Dendritic cell treated with granulocyte-macrophage colony-stimulating factor and Interleukin-4, amounts not matched to agents 40 ng/mL and 50 ng/mL, for 4 days (primary cell): ENCODE measurements at regions of chr15 and their contacts with region 1.

Region 1: DNA sequence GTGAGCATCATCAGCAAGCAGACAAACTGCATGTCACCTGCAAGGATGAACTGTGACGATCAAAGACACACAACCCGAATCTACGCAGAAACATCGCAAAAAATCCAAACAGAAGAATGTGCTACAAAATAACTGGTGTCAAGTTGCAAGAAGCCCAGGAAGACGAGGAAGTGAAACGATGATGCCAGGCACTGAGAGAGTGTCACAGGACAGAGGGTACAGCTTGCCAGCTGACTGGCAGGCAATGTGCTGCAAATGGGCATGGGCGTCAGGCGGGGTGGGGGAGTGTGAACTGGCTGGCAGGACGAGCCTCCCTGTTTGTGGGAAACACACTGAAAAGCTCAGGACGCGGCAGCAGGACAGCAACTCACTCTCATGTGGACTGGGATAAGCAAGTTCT is 28.9 kb upstream of the OCA2 start:
- H3K4me3 Mint-ChIP-seq: no peak overlapping the region
- H3K27ac Mint-ChIP-seq: peak overlapping the region; percentile 25
- H3K4me1 Mint-ChIP-seq: peaks cover 28% of the 10 kb centered on the region
- H3K27me3 Mint-ChIP-seq: no peaks in the 10 kb centered on the region

Region 2: DNA sequence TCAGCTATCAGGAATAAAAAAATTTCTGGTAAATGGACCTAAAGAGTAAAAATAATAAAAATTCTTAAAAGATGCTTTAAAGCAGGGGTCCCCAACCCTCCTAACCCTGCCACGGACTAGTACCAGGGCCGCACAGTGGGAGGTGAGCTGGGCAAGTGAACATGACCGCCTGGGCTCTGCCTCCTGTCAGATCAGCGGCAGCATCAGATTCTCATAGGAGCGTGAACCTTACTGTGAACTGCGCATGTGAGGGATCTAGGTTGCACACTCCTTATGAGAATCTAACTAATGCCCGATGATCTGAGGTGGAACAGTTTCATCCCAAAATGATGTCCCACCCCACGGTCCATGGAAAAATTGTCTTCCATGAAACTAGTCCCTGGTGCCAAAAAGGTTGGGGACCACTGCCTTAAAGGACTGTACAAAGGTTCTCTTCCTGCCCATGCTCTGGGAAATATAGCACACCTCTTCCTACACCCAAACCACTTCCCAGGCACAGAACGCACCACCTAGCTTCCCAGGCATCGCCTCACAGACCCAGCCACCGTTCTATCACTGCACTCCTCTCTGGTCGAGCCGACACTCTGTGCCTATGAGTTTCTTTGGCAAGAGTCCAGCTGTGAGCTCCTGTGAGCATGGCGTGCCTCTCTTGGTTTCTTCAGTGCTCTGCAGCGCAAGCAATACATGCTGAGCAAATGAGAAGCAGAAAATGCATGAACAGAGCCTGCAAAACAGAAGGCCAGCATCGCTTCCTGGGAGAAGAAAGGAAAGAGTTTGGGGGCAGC is 133.8 kb before region 1 on chr15:
- intact Hi-C with region 1: no loop called
- H3K4me3 Mint-ChIP-seq: no peak overlapping the region
- H3K27ac Mint-ChIP-seq: no peak overlapping the region
- H3K4me1 Mint-ChIP-seq: no peaks in the 10 kb centered on the region
- H3K27me3 Mint-ChIP-seq: no peaks in the 10 kb centered on the region

Region 3: GRCh38 chr15:28098766-28099554 is 29.0 kb before region 1 on chr15 and contains the start of gene OCA2:
- intact Hi-C with region 1: loop called (anchors 1 kb)
- H3K4me3 Mint-ChIP-seq: peak within 1 kb of the TSS; percentile 0
- H3K27ac Mint-ChIP-seq: no peak within 1 kb of the TSS
- H3K4me1 Mint-ChIP-seq: peaks cover 23% of the 10 kb centered on the region
- H3K27me3 Mint-ChIP-seq: peaks cover 85% of the 10 kb centered on the region